Psoas muscle (tissue), 8 donors: ENCODE measurements at regions of chr17 and their contacts with region 1.

Region 1: DNA sequence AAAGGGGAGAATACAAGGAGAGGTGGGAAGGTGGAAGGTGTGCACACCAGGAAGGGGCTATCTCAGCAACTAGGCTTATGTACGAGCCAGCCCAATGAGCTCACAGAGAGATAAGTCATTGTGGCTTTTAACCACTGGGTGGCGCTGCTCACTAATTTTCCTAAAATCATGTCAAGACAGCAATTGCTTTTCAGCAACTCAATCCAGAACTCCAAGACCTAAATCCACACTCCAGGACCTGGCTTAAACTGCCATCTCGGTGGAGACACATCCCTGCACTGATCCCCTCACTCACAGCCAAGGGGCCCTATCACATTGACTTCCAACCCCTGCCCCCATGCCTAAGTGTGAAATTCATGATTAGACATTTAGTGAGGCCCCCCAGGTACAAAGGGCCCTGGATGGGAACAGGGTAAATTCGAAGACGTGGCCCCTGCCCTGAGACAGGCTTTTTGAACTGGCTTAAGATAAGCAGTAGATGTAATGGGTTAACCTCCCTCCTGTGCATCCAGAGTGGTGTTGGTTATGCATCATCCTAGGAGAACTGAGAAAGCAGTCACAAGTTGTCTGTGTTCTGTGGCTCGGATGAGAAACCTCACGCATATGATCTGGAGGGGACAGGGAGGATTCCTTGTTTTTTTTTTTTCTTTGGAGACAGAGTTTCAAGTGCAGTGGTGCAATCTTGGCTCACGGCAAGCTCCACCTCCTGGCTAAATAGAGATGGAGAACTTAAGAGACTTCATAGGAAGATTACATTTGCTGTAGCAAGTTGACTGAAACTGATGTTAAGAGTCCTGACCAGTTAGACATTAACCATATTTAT is 11.5 kb downstream of the CCL16 start:
- DNase-seq: peak; percentile 47 to 61
- ATAC-seq: peak; percentile 42 to 80 (median 54)
- H3K4me3 ChIP-seq: no peak overlapping the region
- H3K27ac ChIP-seq: no peak overlapping the region
- H3K4me1 ChIP-seq: no peaks in the 10 kb centered on the region
- H3K27me3 ChIP-seq: no peaks in the 10 kb centered on the region
- CTCF ChIP-seq: peak; percentile 83

Region 2: GRCh38 chr17:36072431-36073121 is 102.8 kb after region 1 on chr17:
- intact Hi-C with region 1: loop called in 1 of 2 experiments (anchors 5 kb)
- DNase-seq: peak; percentile 22 to 63
- ATAC-seq: no peak
- H3K4me3 ChIP-seq: no peak overlapping the region
- H3K27ac ChIP-seq: no peak overlapping the region
- H3K4me1 ChIP-seq: no peaks in the 10 kb centered on the region
- H3K27me3 ChIP-seq: no peaks in the 10 kb centered on the region
- CTCF ChIP-seq: peak; percentile 49

Region 3: DNA sequence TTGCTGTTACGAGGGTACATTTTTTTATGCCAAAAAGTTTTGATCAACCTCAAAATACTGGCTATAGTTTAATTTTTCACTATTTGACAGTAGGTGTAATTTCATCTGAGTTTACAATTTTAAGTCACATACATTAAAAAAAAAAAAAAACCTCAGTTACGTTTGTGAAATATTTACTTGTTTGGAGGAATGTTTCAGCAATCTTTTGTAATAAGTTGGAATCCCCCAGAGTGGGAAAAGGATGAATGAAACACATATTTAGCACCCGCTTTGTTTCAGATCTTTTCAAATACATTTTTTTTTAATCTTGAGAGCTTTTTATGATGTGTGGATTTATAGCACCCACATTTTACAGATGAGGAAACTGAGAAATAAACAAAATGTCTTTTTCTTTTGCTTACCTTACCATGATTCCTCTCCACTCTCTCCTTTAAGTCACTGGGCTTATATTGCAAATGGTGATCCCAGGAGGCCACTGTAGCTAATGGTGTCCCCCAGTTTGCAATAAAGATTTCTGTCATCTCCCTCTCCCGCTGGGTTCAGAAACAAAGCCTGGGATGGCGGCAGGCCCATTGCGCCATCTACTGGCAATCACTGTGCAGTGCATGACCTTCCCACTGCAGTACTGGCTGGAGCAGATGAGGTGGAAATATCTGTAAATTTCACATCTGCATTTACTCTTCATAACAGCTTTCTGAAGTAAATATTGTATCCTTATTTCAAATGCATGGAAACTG is 179.0 kb after region 1 on chr17:
- intact Hi-C with region 1: loop called in 1 of 2 experiments (anchors 5 kb)
- DNase-seq: peak; percentile 67 to 77
- ATAC-seq: peak; percentile 55 to 87 (median 64)
- H3K4me3 ChIP-seq: no peak overlapping the region
- H3K27ac ChIP-seq: no peak overlapping the region
- H3K4me1 ChIP-seq: no peaks in the 10 kb centered on the region
- H3K27me3 ChIP-seq: peaks cover 2 to 6% (median 3%) of the 10 kb centered on the region in 3 donors
- CTCF ChIP-seq: peak; percentile 92

Region 4: GRCh38 chr17:36486204-36487194 is 516.7 kb after region 1 on chr17 and contains the start of gene ZNHIT3:
- intact Hi-C with region 1: loop called (anchors 2 to 5 kb)
- DNase-seq: peak; percentile 91 to 94
- ATAC-seq: peak; percentile 92 to 96 (median 96)
- H3K4me3 ChIP-seq: peak within 1 kb of the TSS; percentile 99
- H3K27ac ChIP-seq: peak within 1 kb of the TSS; percentile 83
- H3K4me1 ChIP-seq: peaks cover 17% of the 10 kb centered on the region
- H3K27me3 ChIP-seq: no peaks in the 10 kb centered on the region
- CTCF ChIP-seq: no peak
- total RNA-seq, gene ZNHIT3: 22.7 to 32.3 (median 31.1) TPM